GM18951 (cell line): ENCODE measurements at regions of chr18 and their contacts with region 1.

Region 1: DNA sequence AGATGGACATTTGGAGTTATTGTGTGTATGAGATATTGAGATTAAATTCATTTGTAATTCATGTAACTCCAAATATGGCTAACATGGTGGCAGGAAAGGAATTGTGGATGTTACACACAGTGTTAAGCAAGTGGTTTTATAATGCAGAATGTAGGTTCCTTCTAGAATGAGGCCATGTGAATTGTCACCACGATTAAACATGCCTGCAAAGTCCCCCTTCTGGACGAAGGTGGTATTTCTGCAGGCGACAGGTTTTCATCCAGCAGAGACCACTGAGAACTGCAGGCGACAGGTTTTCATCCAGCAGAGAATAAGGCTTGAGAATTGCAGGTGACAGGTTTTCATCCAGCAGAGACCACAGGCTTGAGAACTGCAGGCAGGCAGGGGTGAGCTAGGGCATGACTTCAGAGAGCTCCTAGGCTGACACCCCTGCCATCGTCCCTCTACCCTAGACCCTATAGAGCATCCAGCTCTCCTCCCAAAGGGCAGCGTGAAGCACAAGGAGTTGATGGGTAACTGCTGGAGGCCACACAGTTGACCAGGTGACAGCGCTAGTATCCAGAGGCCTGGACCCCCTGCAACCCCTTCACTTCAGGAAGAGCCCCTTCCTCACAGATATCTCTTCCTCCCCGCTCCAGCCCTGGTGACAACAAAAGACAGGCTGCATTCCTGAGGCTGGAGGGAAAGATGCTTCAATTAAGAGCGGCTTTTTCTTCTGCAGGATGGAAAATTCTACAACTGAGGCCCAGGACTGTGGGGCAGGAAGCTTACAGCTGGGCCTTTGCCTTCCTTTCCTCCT is 175.8 kb downstream of the LOXHD1 start:
- POLR2A ChIP-seq: no peak

Region 2: DNA sequence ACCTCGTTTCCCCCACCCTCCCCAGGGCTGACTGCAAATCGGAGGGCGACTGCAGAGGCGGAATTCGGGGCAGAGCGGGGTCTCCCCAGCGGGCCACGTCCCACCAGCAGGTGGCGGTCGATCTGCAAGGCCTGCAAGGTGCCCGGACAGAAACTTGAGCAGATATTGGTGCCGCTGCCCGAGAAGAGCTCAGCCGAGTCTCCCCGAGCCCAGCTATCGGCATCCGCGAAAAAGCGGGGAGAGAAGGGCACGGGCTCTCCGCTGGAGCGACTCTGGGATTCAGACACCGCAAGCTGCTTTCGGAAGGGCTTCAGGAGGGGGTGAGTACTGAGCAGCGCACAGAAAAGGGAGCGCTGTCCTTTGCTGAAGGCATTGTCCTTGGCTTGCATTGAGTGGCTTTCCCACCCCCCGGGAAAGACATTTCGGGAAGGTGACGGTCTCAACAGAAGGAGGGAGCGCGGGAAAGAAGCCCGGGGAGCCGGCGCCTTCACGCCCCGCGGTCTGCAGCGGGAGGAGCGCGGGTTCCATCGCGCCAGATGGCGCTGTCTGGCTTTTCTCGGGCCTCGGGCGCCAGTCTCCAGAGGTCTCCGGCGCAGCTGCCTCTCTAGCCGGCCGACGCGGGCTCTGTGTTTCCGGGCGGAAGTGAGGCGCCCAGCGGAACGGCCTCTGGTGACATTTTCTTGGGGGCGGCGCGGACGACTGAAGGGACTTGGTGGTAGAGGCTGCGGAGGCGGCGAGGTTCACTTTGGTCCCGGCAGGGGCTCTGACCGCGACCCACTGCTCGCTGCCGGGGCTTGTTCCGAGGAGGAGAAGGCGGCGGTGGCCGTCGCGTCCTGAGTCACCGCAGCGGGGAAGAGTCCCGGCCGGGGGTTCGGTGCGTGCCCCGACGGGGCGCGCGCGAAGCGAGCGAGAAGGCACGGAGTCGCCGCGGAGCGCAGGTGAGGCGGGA is 307.6 kb before region 1 on chr18:
- in situ Hi-C with region 1: loop called (anchors 25 kb)
- POLR2A ChIP-seq: peak; percentile 88

Region 3: DNA sequence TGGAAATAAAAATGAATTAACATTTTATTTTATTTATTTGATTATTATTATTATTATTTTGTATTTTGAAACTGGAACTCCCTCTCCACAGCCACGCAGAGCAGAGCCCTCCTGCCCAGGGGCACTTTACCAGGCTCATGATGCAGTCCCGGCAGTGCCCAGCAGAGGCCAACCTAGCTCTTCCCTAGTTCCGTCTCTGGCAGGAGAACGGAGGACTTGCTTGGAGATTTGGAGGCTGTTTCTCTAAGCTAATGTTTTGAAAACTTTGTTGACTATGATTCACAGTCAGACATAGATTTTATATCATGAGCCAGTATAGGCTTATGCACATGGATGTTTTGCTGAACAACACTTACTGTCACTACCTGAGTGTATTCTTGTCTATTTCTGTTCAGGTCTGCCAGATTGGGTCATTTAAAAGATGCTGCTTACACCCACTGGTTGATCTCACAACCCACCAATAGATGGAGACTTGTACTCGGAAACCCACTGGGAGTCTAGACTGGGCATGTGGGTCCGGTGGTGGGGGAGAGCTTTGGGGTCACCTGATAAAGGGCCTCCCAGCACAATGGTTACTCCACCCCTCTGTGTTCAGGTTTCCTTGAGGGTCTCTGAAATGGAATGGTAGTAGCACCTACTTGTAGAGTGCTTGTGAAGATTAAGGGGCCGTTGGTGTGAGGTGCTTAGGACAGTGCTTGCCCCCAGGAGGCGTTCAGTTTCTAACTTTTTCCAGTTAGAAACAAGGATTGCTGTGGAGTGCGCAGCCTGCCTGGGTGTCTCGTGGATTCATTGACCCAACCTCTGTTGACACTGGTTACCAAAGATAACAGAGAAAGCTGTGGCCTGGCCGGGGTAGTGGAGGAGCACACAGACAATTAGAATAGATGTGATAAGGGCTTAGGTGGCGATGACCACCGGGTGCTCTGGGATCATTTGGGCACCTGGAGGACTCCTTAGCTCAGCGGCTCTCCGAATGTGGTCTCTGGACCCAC is 199.8 kb before region 1 on chr18:
- in situ Hi-C with region 1: loop called (anchors 10 kb)
- POLR2A ChIP-seq: no peak